Lower leg skin (tissue), 4 donors: ENCODE measurements at regions of chr7 and their contacts with region 1.

Region 1: DNA sequence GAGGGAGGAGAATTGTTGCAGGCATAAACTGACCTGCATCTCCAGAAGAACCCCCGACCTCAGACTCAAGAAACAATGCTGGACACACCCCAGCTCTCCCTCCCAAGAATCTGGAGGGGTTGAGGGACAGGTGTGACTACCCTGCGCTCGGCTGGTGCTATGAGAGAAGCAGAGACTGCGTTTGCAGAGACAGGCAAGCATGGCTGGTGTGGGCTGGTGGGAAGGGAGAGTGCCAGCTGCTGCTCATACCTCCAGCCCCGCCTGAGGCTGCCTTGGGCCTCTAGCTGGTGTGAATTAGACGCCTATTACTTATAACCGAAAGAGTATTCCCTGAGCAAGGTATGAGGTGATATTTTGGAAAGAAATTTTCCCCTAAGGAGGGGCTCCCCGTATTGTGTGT is 48.3 kb upstream of the DDC start:
- DNase-seq: no peak
- H3K4me3 ChIP-seq: no peak overlapping the region
- CTCF ChIP-seq: no peak
- POLR2A ChIP-seq: no peak

Region 2: GRCh38 chr7:50664461-50664922 is 51.0 kb after region 1 on chr7:
- intact Hi-C with region 1: no loop called
- DNase-seq: no peak
- H3K4me3 ChIP-seq: no peak overlapping the region
- CTCF ChIP-seq: no peak
- POLR2A ChIP-seq: no peak

Region 3: DNA sequence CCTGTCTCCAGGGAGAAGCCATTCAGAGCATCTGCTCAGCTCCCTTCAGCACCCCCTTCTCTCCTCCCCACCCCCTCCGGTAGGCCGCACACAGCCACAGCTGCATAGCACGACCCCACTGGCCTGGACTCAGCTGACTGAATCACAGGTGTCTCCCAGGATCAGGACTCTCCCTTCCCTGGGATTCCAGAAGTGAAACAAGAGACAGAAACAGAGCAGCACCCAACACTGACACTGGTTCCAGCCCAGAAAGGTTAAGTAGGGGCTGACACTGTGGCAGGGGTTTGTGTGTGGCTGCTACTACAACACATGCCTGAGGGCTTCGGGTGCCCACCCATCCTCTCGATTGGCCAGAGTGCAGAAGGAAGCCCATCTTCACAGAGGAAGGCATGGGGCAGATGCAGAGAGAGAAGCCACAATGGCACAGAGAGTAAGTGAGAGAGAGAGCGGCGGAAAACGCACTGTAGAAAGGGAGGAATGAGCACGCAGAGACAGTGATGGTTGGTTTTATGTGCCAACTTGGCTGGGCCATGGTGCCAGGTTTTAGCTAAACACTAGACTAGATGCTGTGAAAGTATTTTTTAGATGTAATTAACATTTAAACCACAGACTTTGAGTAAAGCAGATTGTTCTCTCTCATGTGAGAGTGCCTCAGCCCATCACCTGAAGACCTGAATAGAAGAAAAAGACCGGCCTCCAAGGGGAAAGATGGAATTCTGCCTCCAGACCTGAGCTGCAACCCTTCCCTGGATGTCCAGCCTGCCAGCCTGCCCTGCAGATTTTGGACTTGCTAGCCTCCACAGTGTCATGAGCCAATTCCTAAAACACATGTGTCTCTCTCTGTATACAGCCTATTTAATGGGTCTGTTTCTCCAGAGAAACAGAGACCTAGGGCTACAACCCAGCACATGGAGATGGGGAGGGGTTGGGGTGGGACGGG is 61.7 kb after region 1 on chr7:
- intact Hi-C with region 1: loop called (anchors 2 kb)
- DNase-seq: no peak
- H3K4me3 ChIP-seq: no peak overlapping the region
- CTCF ChIP-seq: no peak
- POLR2A ChIP-seq: no peak